Activated CD8-positive, alpha-beta memory T cell treated with anti-CD3 and anti-CD28 coated beads, Interleukin-2, amount 10 ng/mL, durations not matched to agents 7 days and 5 days (primary cell): ENCODE measurements at regions of chr6 and their contacts with region 1.

Region 1: DNA sequence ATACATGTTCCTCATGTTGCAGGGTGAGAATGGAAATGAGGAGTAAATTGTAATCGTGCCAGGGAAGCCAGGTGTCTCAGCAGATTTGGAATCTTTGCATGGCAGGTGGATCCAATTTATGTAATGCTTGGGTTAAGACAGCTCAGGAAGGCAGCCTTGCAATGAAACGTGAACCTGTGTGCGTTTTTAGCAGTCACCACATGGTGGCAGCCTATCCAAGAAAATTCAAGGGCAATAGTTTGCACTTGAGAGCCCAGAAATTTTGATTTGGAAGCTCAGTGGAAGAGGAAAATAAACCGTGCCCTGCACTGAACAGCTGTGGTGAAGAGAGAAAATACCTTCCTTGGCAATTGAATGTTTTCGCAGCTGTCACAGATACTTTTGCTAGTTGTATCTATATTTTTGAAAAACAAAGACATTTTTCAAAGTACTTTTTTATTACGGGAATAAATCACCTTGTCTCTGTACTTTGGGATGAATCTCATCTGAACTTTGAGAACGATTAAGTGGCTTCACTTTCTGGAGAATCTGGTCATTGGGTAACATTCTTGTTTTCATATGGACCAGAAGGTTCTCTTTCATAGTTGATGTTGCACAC is 26.5 kb downstream of the MTHFD1L start:
- DNase-seq: peak; percentile 76
- ATAC-seq: peak; percentile 57
- H3K4me3 Mint-ChIP-seq: no peak overlapping the region
- H3K27ac Mint-ChIP-seq: no peak overlapping the region
- H3K4me1 Mint-ChIP-seq: peaks cover 48% of the 10 kb centered on the region
- H3K27me3 Mint-ChIP-seq: no peaks in the 10 kb centered on the region

Region 2: GRCh38 chr6:150910556-150910955 is 18.6 kb after region 1 on chr6:
- CTCF ChIA-PET with region 1: interaction called, 13 read pairs
- DNase-seq: no peak
- ATAC-seq: no peak
- H3K4me3 Mint-ChIP-seq: no peak overlapping the region
- H3K27ac Mint-ChIP-seq: no peak overlapping the region
- H3K4me1 Mint-ChIP-seq: no peaks in the 10 kb centered on the region
- H3K27me3 Mint-ChIP-seq: no peaks in the 10 kb centered on the region

Region 3: GRCh38 chr6:150977281-150977680 is 85.3 kb after region 1 on chr6:
- CTCF ChIA-PET with region 1: no interaction called
- DNase-seq: no peak
- ATAC-seq: no peak
- H3K4me3 Mint-ChIP-seq: no peak overlapping the region
- H3K27ac Mint-ChIP-seq: no peak overlapping the region
- H3K4me1 Mint-ChIP-seq: no peaks in the 10 kb centered on the region
- H3K27me3 Mint-ChIP-seq: no peaks in the 10 kb centered on the region

Region 4: DNA sequence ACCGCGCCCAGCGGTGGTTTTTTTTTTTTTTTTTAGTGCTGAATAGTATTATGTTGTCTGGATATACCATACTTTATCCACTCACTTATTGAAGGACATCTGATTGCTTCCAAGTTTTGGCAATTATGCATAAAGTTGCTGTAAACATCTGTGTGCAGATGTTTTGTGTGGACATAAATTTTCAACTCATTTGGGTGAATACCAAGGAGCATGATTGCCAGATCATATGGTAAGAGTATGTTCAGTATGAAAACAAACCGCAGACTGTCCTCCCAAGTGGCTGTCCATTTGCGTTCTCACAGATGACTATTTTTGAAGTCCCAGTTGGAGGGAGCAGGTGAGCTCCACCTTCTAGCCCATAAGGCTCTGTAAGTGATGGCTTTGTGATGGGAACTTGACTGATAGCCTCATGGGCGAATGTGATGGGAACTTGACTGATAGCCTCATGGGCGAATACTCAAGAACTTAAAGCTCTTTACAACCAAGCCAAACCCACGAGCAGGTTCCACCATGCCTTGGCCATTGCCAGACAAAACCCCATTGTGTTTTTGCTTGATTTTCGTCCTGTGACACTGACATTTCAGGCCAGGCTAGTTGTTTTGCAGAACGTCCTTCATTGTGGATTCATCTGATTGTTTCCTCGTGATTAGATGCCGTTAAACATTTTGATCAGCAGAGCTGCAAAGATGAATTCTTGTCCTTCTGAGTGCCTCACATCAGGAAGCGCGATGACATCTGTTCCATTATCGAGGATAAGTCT is 448.4 kb after region 1 on chr6:
- CTCF ChIA-PET with region 1: interaction called, 35 read pairs
- DNase-seq: no peak
- ATAC-seq: no peak
- H3K4me3 Mint-ChIP-seq: no peak overlapping the region
- H3K27ac Mint-ChIP-seq: no peak overlapping the region
- H3K4me1 Mint-ChIP-seq: no peaks in the 10 kb centered on the region
- H3K27me3 Mint-ChIP-seq: peaks cover 12% of the 10 kb centered on the region